ENCODE measurements at regions of chr3 and their contacts with region 1.

Region 1: DNA sequence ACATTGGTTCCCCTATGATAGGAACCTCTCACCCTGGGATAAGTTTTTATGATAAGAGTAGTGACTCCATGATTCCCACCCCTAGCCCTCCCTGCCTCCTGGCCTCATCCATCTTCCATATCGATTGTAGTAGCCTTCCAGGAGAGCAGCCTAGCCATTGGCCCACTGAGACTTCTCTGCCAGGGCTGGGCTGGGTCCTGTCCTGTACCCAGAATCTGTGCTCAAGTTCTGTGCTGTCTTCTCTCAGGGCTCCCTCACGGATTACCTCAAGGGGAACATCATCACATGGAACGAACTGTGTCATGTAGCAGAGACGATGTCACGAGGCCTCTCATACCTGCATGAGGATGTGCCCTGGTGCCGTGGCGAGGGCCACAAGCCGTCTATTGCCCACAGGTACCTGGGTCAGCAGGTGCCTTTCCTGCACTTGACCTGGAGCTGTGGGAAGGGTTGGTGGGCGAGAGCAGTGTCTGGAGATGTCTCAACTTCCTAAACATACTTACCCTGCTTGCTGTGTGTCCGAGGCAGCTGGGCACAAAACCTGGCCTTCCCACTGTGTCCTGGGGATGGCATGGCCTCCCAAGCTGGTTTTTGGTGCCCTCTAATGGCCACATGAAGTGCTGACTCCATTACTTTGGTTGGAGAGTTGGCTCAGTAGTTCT is 16.6 kb upstream of the EXOG start:
- DNase-seq: peak; percentile 24 to 89 (median 72)

Region 2: GRCh38 chr3:38004415-38005076 is 475.0 kb before region 1 on chr3:
- intact Hi-C with region 1: loop called (anchors 10 kb)
- DNase-seq: peak; percentile 63 to 96 (median 86)

Region 3: GRCh38 chr3:38136777-38137614 is 342.6 kb before region 1 on chr3 and contains the start of gene ACAA1:
- intact Hi-C with region 1: loop called (anchors 10 kb)
- DNase-seq: peak; percentile 94 to 100 (median 99)

Region 4: GRCh38 chr3:38346587-38347410 is 132.8 kb before region 1 on chr3 and contains the start of gene XYLB:
- intact Hi-C with region 1: loop called (anchors 5 kb)
- DNase-seq: peak; percentile 52 to 92 (median 84)